SK-N-SH (cell line): ENCODE measurements at regions of chr1 and their contacts with region 1.

Region 1: GRCh38 chr1:147541672-147542568 is 619 bp downstream of the BCL9 start:
- DNase-seq: peak; percentile 58
- H3K4me3 ChIP-seq: peak overlapping the region; percentile 69 to 83
- H3K27ac ChIP-seq: peak overlapping the region; percentile 83 to 96
- H3K4me1 ChIP-seq: peaks cover 34 to 35% of the 10 kb centered on the region in 2 experiments
- H3K27me3 ChIP-seq: no peaks in the 10 kb centered on the region
- CTCF ChIP-seq: no peak
- EP300 ChIP-seq: no peak
- RAD21 ChIP-seq: no peak; the same call in 1 of the 2 replicates

Region 2: DNA sequence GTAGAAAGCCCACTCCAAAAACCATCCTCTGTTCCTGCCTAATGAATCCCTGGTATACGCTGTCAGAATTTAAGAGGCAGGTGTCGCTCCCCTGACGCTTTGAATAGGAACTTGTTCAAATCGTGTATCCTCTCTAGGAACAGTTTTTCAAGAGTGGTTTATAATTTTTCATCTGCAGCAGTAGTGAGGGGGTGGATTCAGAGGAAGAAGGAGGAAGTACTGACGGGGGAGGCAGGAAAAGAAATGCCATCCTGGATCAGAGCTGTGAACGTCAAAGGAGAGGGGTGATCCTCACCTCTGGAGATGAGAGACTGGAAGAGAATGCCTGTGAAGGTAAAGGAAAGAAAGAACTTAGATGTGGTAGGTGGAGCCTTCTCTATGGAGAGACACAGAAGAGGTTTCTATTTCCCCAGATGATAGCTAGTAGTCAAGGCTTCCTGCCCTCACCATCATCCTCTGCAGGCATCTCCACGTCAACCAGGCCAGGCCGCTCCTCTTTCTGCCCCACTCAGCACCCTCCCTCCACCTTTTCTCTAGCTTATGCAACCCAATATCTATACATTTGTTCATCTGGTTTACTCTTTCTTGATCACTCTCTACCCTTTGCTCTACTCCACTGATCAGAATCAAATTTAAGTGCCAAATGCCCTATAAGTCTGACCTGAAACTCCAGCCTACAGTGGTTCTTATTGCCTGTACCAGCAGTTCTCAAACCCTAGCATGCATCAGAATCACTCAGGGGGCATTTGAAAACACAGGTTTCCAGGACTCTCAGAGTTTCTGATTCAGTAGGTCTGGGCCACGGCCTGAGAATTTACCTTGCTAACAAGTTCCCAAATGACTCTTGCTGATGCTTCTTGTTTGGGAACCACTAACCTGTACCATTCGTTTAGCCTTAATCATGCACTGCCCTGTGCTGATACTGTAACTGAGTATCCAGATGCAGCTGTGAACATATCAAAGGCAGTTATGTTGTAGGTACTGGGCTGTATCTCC is 13.7 kb before region 1 on chr1:
- CTCF ChIA-PET with region 1: no interaction called
- POLR2A ChIA-PET with region 1: no interaction called
- DNase-seq: no peak
- H3K4me3 ChIP-seq: no peak overlapping the region
- H3K27ac ChIP-seq: no peak overlapping the region
- H3K4me1 ChIP-seq: no peaks in the 10 kb centered on the region
- H3K27me3 ChIP-seq: peaks cover 6% of the 10 kb centered on the region; the same call in 1 of the 2 replicates
- CTCF ChIP-seq: no peak
- EP300 ChIP-seq: no peak
- RAD21 ChIP-seq: no peak

Region 3: DNA sequence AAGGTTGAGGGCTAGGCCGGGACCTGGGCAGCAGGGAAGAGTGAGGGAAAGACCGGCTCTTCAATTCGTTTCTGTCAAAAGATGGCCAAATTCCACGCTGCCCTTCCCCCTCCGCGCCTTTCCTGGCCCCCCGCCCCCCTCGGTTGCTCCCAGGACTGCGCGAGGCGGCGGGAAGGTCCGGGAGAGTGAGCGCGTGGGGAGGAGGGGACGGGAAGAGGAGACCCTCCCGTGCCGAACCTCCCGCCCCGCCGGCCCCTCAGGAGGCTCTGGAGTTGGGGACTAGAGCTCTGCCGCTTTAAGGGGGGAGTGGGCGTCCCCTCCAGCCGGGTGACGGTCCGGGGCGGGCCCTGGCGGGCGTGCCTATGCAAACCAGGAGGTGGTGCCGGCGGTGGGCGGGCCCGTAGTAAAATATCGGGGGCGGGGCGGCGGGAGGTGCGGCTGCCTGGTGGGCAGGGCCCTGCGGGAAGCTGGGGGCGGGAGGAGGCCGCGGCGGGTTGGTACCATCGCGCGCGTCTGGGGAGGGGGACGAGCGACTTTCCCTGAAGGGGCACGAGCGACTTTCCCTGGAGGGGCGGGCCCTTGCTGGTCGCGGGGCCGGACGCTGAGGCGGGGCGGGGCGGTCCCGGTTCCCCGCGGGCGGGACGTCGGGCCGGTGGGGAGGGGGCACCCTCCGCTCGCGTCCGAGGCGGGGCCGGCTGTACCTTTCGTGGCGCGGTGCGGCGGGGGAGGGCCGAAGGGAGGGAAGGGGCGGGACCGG is 57.6 kb after region 1 on chr1:
- CTCF ChIA-PET with region 1: interaction called, 8 read pairs
- POLR2A ChIA-PET with region 1: interaction called, 38 read pairs
- DNase-seq: peak; percentile 97
- H3K4me3 ChIP-seq: peak overlapping the region; percentile 77
- H3K27ac ChIP-seq: peak overlapping the region; percentile 62 to 95
- H3K4me1 ChIP-seq: peaks cover 0 to 15% of the 10 kb centered on the region in 2 experiments; a peak in 2 of 4 replicates
- H3K27me3 ChIP-seq: no peaks in the 10 kb centered on the region
- CTCF ChIP-seq: no peak
- EP300 ChIP-seq: no peak
- RAD21 ChIP-seq: no peak